ENCODE measurements at regions of chr11 and their contacts with region 1.

Region 1: DNA sequence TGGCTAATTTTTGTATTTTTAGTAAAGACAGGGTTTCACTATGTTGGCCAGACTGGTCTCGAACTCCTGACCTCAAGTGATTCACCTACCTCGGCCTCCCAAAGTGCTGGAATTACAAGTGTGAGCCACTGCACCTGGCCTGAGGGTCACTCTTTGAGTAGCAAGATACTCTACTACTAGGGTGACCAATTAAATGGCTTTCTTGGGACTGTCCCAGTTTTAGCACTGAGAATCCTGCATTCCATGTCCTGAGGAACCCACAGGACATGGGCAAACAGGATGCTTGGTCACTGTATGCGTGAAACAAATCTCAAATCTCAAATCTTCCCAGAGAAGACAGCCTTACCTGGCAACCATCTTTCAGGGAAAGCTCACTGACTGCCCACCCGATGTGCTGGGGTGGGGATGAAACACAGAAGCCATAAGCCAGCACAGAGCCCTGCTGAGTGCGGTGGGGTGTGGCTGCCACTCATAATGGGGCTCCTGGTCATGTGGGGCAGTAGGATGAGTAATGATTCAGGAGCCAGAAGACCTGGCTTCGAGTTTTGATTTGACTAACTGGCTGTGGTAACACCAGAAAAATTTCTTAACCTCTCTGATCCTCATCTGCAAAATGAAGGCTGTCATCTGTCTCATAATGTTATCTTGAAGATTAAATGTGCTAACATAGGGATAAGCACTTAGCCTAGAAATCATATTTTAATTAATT is 11.5 kb downstream of the CLMP start:
- DNase-seq: no peak
- H3K4me3 ChIP-seq: no peak overlapping the region
- H3K27ac ChIP-seq: no peak overlapping the region
- H3K4me1 ChIP-seq: peaks cover 5 to 29% (median 14%) of the 10 kb centered on the region in 4 experiments
- H3K27me3 ChIP-seq: no peaks in the 10 kb centered on the region
- CTCF ChIP-seq: no peak
- EP300 ChIP-seq: no peak
- POLR2A ChIP-seq: no peak
- RAD21 ChIP-seq: no peak

Region 2: DNA sequence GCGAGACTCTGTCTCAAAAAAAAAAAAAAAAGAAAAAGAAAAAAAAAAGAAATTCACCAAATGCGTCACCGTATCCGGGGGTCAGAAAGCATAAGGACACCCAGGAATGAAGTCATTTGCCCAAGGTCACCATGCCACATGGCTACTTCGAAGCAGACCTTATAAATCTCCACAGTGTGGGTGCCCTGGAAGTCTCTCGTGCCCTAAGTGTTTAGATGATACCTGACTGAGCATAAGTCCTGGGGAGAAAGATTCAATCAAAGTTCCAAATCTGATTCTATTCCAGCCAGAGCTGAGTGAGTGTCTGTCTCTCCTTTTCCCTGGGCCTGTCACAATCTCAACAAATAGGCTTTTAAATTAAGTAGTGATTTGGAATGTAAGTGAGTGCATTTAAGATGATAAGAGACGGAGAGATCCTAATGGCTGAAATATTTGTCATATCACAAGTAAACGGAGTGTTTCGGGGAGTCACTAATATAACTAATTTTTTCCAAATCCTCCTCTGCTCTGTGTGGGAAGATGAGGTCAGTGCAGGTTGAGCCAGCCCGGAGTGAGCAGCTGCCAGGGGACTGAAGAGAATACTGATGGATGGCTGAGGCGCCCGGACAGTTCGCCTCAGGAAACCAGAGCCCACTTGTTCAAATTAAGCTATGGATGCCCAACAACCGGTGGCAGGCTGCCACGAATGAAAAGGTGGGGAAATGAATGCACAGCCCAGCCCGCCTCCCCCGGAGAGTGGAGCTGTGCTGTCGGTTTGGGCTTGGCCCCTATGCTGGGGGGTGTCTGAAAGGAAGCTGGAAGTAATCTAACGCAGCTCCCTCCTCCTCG is 143.7 kb before region 1 on chr11:
- CTCF ChIA-PET with region 1: no interaction called
- POLR2A ChIA-PET with region 1: no interaction called
- DNase-seq: no peak
- H3K4me3 ChIP-seq: no peak overlapping the region
- H3K27ac ChIP-seq: no peak overlapping the region
- H3K4me1 ChIP-seq: no peaks in the 10 kb centered on the region
- H3K27me3 ChIP-seq: no peaks in the 10 kb centered on the region
- CTCF ChIP-seq: no peak
- EP300 ChIP-seq: no peak
- POLR2A ChIP-seq: no peak
- RAD21 ChIP-seq: no peak

Region 3: GRCh38 chr11:123195188-123196059 is 11.9 kb after region 1 on chr11 and contains the start of gene CLMP:
- CTCF ChIA-PET with region 1: interaction called, 8 read pairs
- POLR2A ChIA-PET with region 1: interaction called, 67 read pairs
- DNase-seq: peak in 1 of 2 experiments; percentile 83
- H3K4me3 ChIP-seq: peak within 1 kb of the TSS; percentile 53 to 76 (median 69)
- H3K27ac ChIP-seq: peak within 1 kb of the TSS; percentile 54; the same call in 1 of the 2 replicates
- H3K4me1 ChIP-seq: peaks cover 4 to 29% (median 19%) of the 10 kb centered on the region in 4 experiments
- H3K27me3 ChIP-seq: peaks cover 0 to 6% (median 3%) of the 10 kb centered on the region in 4 experiments; a peak in 4 of 7 replicates
- CTCF ChIP-seq: no peak
- EP300 ChIP-seq: peak in 1 of 2 experiments; percentile 90; a peak in 1 of 3 replicates
- POLR2A ChIP-seq: peak; percentile 26 to 40; a peak in 1 of 3 replicates
- RAD21 ChIP-seq: no peak
- total RNA-seq, gene CLMP: 20.8 and 24.1 TPM in 2 replicates

Measured in H1 (cell line).